ENCODE measurements at regions of chr2 and their contacts with region 1.

Region 1: GRCh38 chr2:147937744-147938349 is 82.7 kb downstream of the ORC4 start:
- DNase-seq: no peak
- ATAC-seq: peak; percentile 47
- H3K4me3 Mint-ChIP-seq: no peak overlapping the region
- H3K27ac Mint-ChIP-seq: no peak overlapping the region
- H3K4me1 Mint-ChIP-seq: no peaks in the 10 kb centered on the region
- H3K27me3 Mint-ChIP-seq: no peaks in the 10 kb centered on the region
- CTCF ChIP-seq: peak; percentile 97

Region 2: DNA sequence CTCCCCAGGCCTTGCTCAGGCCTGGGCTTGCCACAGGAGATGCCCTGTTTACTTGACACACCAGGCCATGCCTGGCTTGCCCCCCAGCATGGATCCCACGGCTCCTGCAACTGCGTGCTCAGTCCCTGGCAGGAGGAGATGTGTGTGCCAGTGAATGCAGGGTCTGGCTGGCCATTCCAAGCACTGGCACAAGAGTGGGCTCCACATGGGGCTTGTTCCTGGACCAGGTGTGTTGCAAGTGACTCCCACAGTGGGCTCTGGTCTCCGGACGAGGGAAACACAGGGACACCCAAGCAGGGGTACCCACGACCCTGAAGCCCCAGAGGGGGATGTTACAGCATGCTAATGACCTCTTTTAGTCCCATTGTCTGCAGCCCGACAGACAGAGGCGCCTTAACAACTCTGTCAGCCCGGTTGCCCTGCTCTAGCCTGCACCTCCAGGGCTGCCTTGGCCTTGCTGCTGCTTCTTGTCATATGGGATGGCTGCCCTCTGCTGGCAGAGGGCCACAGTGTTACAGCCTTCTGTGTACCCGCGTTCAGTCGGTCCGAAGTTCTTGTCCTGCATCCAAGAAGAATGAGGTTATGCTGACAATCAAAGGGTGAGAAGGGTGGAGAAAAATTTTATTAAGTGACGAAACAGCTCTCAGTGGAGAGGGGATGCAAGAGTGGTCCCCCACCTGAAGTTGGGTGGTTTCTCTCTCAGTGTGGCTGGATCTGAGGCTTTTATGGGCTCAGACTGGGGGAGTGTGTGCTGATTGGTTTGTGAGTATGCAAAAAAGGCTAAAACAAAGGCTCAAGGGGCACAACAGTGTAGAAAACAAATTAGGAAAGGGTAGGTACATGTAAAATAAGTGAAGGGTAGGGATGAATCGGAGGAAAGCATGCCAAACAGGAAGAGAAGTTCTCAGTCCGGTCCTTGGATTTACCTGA is 263.5 kb after region 1 on chr2:
- CTCF ChIA-PET with region 1: no interaction called
- POLR2A ChIA-PET with region 1: no interaction called
- intact Hi-C with region 1: loop called (anchors 5 kb)
- DNase-seq: peak; percentile 65
- ATAC-seq: peak; percentile 78
- H3K4me3 Mint-ChIP-seq: no peak overlapping the region
- H3K27ac Mint-ChIP-seq: no peak overlapping the region
- H3K4me1 Mint-ChIP-seq: no peaks in the 10 kb centered on the region
- H3K27me3 Mint-ChIP-seq: no peaks in the 10 kb centered on the region
- CTCF ChIP-seq: peak; percentile 56

Region 3: GRCh38 chr2:148218326-148219075 is 280.7 kb after region 1 on chr2:
- CTCF ChIA-PET with region 1: no interaction called
- POLR2A ChIA-PET with region 1: no interaction called
- intact Hi-C with region 1: no loop called
- DNase-seq: no peak
- ATAC-seq: no peak
- H3K4me3 Mint-ChIP-seq: no peak overlapping the region
- H3K27ac Mint-ChIP-seq: no peak overlapping the region
- H3K4me1 Mint-ChIP-seq: no peaks in the 10 kb centered on the region
- H3K27me3 Mint-ChIP-seq: no peaks in the 10 kb centered on the region
- CTCF ChIP-seq: no peak

Measured in activated CD8-positive, alpha-beta T cell treated with anti-CD3 and anti-CD28 coated beads for 36 hours (primary cell).